GM13977 (cell line): ENCODE measurements at regions of chr1 and their contacts with region 1.

Region 1: DNA sequence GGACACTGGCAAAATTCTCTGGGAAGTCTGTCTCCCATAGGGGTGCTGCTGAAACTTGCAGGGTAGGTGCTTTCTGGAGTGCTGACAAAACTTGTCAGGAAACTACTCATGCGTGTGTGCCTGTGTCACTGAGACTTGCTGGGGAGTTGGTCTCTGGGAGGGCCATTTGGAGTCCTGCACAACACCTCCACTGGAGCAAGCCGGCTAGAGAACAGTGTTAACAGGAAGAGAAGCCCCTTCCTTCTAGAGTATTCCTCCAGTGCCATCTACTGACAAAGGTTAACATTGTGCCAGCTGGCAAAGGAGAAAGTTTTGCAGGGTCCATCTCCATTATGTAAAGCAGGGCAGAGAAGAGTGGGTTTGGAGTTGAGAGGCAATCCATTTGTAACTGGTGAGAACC is 30.0 kb downstream of the ZMYM4 start:
- DNase-seq: peak; percentile 47
- CTCF ChIP-seq: peak; percentile 55

Region 2: DNA sequence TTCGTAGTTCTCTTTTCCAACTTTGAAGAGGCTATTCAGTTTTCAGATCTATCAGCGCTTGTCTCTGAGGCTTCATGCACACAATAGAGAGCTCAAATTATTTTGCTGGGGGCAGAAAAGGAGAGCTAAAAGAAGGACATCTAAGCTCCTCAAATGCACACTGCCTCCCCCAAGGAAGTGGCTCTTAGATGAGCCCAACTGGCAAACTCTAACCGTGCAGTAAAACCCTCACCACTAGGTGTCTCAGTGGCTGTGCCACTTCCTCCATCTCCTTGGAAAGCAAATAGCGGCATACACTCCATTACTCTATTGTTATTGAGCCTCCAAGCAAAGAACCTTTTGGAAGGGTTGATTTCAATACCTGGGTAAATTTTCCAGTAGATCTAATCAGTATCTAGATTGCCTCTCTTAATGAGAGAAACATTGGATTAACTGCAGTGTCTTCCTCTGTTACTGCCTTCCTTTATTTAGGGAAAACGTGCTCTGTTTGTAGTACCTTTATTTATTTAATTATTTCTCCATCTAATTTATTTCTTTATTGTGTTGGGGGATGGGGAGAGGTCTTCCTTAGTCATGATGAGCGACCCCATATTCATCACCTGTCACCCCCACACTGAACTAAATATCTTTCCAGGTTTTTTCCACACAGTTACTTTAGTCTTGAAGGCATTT is 96.3 kb before region 1 on chr1:
- in situ Hi-C with region 1: loop called (anchors 10 kb)
- DNase-seq: peak; percentile 77
- CTCF ChIP-seq: peak; percentile 86

Region 3: DNA sequence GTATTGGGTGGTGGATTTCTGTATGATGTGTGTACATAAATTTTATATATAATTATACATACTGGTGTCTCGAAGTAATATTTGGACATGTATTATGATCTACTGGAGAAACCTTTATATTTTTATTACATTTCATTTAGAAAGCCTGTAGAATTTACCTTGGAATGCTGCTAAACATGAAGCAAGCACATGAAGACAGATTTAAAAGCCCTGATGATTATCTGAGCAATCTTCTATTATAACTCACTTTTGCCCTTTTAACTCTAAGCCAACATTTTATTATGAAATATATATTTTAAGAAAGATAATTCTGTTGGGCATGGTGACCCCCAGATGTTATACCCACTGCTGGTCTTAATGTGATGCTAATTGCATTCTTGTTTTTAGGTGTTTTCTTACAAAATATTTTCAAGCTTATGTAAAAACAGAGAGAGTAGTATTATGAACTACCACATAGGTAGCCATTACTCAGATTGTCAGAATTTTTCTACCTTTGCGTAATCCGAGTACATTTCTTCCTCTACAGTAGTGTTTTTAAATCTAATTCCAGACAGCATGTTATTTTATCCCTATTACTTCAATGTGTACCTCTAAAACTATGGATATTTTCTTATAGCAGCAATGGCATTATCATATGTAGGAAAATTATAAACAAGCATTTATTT is 675.2 kb after region 1 on chr1:
- in situ Hi-C with region 1: no loop called
- DNase-seq: no peak
- CTCF ChIP-seq: no peak